HepG2 (cell line): ENCODE measurements at regions of chr13 and their contacts with region 1.

Region 1: GRCh38 chr13:81639984-81640582 is 1299.2 kb upstream of the SPRY2 start:
- DNase-seq: peak; percentile 25
- ATAC-seq: peak; percentile 75
- H3K4me3 ChIP-seq: no peak overlapping the region
- H3K27ac ChIP-seq: no peak overlapping the region
- H3K4me1 ChIP-seq: no peaks in the 10 kb centered on the region
- H3K27me3 ChIP-seq: no peaks in the 10 kb centered on the region
- CTCF ChIP-seq: peak; percentile 58
- EP300 ChIP-seq: no peak
- POLR2A ChIP-seq: no peak
- RAD21 ChIP-seq: no peak

Region 2: GRCh38 chr13:81872581-81872980 is 232.5 kb after region 1 on chr13:
- CTCF ChIA-PET with region 1: interaction called, 14 read pairs
- POLR2A ChIA-PET with region 1: no interaction called
- in situ Hi-C with region 1: loop called (anchors 10 kb)
- intact Hi-C with region 1: loop called (anchors 1 kb)
- DNase-seq: peak; percentile 38
- ATAC-seq: peak; percentile 63
- H3K4me3 ChIP-seq: no peak overlapping the region
- H3K27ac ChIP-seq: no peak overlapping the region
- H3K4me1 ChIP-seq: peaks cover 19% of the 10 kb centered on the region
- H3K27me3 ChIP-seq: peaks cover 1 to 22% of the 10 kb centered on the region in 2 experiments; a peak in 4 of 5 replicates
- CTCF ChIP-seq: peak; percentile 52
- EP300 ChIP-seq: no peak
- POLR2A ChIP-seq: no peak
- RAD21 ChIP-seq: no peak

Region 3: GRCh38 chr13:81957133-81957532 is 317.1 kb after region 1 on chr13:
- CTCF ChIA-PET with region 1: no interaction called
- POLR2A ChIA-PET with region 1: no interaction called
- in situ Hi-C with region 1: no loop called
- intact Hi-C with region 1: loop called (anchors 1 kb)
- DNase-seq: peak; percentile 2
- ATAC-seq: peak; percentile 72
- H3K4me3 ChIP-seq: no peak overlapping the region
- H3K27ac ChIP-seq: no peak overlapping the region
- H3K4me1 ChIP-seq: no peaks in the 10 kb centered on the region
- H3K27me3 ChIP-seq: no peaks in the 10 kb centered on the region
- CTCF ChIP-seq: peak; percentile 32
- EP300 ChIP-seq: no peak
- POLR2A ChIP-seq: no peak
- RAD21 ChIP-seq: no peak